Calu3 (cell line): ENCODE measurements at regions of chr7 and their contacts with region 1.

Region 1: GRCh38 chr7:155190688-155191087 is 107.0 kb upstream of the INSIG1 start:
- DNase-seq: peak; percentile 81
- H3K4me3 Mint-ChIP-seq: peak overlapping the region; percentile 47
- H3K27ac Mint-ChIP-seq: no peak overlapping the region
- H3K4me1 Mint-ChIP-seq: peaks cover 40% of the 10 kb centered on the region
- H3K27me3 Mint-ChIP-seq: no peaks in the 10 kb centered on the region
- CTCF ChIP-seq: peak; percentile 87

Region 2: DNA sequence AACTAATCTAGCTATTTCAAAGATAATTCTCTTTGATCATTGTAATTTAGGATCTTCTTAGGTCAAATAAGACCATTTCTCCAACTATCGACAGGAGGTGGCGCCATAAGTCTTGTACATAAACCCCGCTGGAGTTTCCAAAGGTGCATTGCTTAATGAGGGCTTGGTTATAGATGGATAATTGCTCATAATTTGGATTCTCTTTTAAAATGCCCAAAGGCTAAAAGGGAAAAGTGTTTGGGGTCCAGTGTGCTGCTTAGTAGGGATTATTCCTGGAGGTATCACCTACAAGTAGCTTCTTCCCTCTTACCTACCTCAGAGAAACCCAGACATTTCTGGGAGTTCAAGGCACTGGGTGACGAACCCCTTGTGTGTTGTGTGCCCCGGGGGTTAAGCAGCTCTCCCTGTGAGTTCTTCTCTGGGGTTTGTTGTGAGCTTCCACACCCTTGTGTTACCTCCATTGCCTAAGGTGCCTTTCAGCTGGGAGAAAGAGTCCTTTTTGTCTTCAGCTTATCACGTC is 263.0 kb before region 1 on chr7:
- CTCF ChIA-PET with region 1: no interaction called
- intact Hi-C with region 1: loop called (anchors 2 kb)
- DNase-seq: peak; percentile 76
- H3K4me3 Mint-ChIP-seq: peak overlapping the region; percentile 98
- H3K27ac Mint-ChIP-seq: peak overlapping the region; percentile 94
- H3K4me1 Mint-ChIP-seq: no peaks in the 10 kb centered on the region
- H3K27me3 Mint-ChIP-seq: no peaks in the 10 kb centered on the region
- CTCF ChIP-seq: peak; percentile 44

Region 3: DNA sequence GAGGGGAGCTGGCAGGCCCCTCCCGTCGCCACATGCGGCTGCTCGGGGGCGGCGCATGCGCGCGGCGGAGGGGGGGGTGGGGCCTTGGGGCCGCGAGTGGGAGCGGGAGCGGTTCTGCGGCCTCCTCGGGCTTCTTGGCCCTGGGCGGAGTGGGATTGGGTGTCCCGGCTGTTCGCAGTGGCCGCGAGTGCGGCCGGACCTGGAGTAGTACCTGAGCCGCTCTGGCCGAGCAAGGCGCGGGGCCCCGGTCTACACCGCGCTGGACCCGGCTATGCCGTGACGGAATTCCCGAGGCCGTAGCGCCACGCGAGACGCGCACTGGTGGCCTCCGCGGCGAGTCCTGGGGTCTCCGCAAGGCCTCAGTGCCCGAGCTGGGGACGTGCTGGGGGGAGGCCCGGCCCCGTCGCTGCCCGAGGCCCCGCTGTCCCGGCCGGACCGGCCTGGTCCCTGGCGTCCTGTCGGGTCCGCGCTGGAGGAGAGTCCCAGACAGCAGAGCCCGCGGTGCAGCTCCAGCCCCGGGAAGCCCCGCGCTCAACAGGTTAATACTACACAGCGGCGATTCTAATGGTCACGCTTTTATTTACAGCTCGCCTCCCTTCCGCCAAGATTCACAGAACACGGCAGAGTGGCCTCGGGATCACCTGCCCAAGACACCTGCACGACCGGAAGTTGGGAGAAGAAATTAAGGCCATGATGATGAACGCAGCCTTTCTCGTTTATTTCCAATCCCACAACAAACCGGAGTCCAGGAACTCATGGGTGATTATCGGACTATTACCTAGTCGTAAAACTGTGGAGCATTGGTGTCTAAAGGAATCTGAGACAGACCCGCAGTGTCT is 187.1 kb before region 1 on chr7:
- CTCF ChIA-PET with region 1: no interaction called
- intact Hi-C with region 1: loop called (anchors 5 kb)
- DNase-seq: peak; percentile 83
- H3K4me3 Mint-ChIP-seq: peak overlapping the region; percentile 78
- H3K27ac Mint-ChIP-seq: peak overlapping the region; percentile 88
- H3K4me1 Mint-ChIP-seq: no peaks in the 10 kb centered on the region
- H3K27me3 Mint-ChIP-seq: no peaks in the 10 kb centered on the region
- CTCF ChIP-seq: no peak

Region 4: GRCh38 chr7:155166673-155167370 is 23.9 kb before region 1 on chr7:
- CTCF ChIA-PET with region 1: no interaction called
- intact Hi-C with region 1: no loop called
- DNase-seq: peak; percentile 74
- H3K4me3 Mint-ChIP-seq: no peak overlapping the region
- H3K27ac Mint-ChIP-seq: no peak overlapping the region
- H3K4me1 Mint-ChIP-seq: peaks cover 18% of the 10 kb centered on the region
- H3K27me3 Mint-ChIP-seq: peaks cover 16% of the 10 kb centered on the region
- CTCF ChIP-seq: no peak

Region 5: GRCh38 chr7:155230168-155230593 is 39.5 kb after region 1 on chr7:
- CTCF ChIA-PET with region 1: no interaction called
- intact Hi-C with region 1: loop called (anchors 5 kb)
- DNase-seq: peak; percentile 91
- H3K4me3 Mint-ChIP-seq: peak overlapping the region; percentile 15
- H3K27ac Mint-ChIP-seq: peak overlapping the region; percentile 93
- H3K4me1 Mint-ChIP-seq: peaks cover 38% of the 10 kb centered on the region
- H3K27me3 Mint-ChIP-seq: no peaks in the 10 kb centered on the region
- CTCF ChIP-seq: no peak

Region 6: GRCh38 chr7:155252444-155252887 is 61.8 kb after region 1 on chr7:
- CTCF ChIA-PET with region 1: no interaction called
- intact Hi-C with region 1: loop called (anchors 5 kb)
- DNase-seq: no peak
- H3K4me3 Mint-ChIP-seq: no peak overlapping the region
- H3K27ac Mint-ChIP-seq: no peak overlapping the region
- H3K4me1 Mint-ChIP-seq: no peaks in the 10 kb centered on the region
- H3K27me3 Mint-ChIP-seq: peaks cover 15% of the 10 kb centered on the region
- CTCF ChIP-seq: no peak

Region 7: GRCh38 chr7:155298834-155299534 is 108.3 kb after region 1 on chr7:
- CTCF ChIA-PET with region 1: interaction called, 4 read pairs
- intact Hi-C with region 1: loop called (anchors 5 kb)
- DNase-seq: peak; percentile 94
- H3K4me3 Mint-ChIP-seq: peak overlapping the region; percentile 92
- H3K27ac Mint-ChIP-seq: peak overlapping the region; percentile 85
- H3K4me1 Mint-ChIP-seq: peaks cover 36% of the 10 kb centered on the region
- H3K27me3 Mint-ChIP-seq: no peaks in the 10 kb centered on the region
- CTCF ChIP-seq: no peak

Region 8: GRCh38 chr7:155344600-155345433 is 154.1 kb after region 1 on chr7:
- CTCF ChIA-PET with region 1: no interaction called
- intact Hi-C with region 1: loop called (anchors 1 kb)
- DNase-seq: peak; percentile 86
- H3K4me3 Mint-ChIP-seq: peak overlapping the region; percentile 43
- H3K27ac Mint-ChIP-seq: no peak overlapping the region
- H3K4me1 Mint-ChIP-seq: no peaks in the 10 kb centered on the region
- H3K27me3 Mint-ChIP-seq: peaks cover 39% of the 10 kb centered on the region
- CTCF ChIP-seq: peak; percentile 92